ENCODE measurements at regions of chr4 and their contacts with region 1.

Region 1: DNA sequence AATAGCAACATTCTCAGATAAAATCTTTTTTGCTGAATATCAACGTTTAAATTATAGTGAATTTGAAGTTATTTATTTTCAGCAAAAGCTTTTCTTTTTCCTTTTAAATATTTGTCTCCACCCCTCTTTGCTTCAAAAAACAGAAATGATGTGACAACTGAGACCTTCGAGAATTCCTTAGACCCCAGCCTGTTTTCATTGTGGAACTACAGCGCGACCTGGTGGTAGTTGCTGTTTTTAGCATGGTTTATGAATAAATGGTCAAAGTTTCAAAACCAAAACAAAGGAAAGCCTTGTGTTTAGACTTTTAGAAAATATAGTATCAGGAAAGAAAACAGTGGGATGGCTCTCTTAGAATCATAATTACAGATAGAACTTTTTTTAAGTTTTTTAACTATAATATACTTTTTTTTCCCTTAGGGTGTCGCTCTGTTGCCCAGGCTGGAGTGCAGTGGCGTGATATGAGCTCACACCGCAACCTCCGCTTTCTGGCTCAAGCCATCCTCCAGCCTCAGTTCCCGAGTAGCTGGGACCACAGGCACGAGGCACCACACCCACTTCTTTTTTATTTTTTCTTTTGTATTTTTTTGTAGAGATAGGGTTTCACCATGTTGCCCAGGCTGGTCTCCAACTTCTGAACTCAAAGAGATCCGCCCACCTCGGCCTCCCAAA is 26.8 kb upstream of the TMEM184C start:
- H3K4me3 Mint-ChIP-seq: no peak overlapping the region
- H3K27ac Mint-ChIP-seq: no peak overlapping the region
- H3K4me1 Mint-ChIP-seq: no peaks in the 10 kb centered on the region
- H3K27me3 Mint-ChIP-seq: no peaks in the 10 kb centered on the region

Region 2: GRCh38 chr4:147160908-147161513 is 429.4 kb before region 1 on chr4:
- intact Hi-C with region 1: loop called (anchors 5 kb)
- H3K4me3 Mint-ChIP-seq: no peak overlapping the region
- H3K27ac Mint-ChIP-seq: no peak overlapping the region
- H3K4me1 Mint-ChIP-seq: no peaks in the 10 kb centered on the region
- H3K27me3 Mint-ChIP-seq: peaks cover 19% of the 10 kb centered on the region

Region 3: GRCh38 chr4:147407261-147408045 is 182.9 kb before region 1 on chr4:
- intact Hi-C with region 1: no loop called
- H3K4me3 Mint-ChIP-seq: no peak overlapping the region
- H3K27ac Mint-ChIP-seq: no peak overlapping the region
- H3K4me1 Mint-ChIP-seq: no peaks in the 10 kb centered on the region
- H3K27me3 Mint-ChIP-seq: no peaks in the 10 kb centered on the region

Region 4: DNA sequence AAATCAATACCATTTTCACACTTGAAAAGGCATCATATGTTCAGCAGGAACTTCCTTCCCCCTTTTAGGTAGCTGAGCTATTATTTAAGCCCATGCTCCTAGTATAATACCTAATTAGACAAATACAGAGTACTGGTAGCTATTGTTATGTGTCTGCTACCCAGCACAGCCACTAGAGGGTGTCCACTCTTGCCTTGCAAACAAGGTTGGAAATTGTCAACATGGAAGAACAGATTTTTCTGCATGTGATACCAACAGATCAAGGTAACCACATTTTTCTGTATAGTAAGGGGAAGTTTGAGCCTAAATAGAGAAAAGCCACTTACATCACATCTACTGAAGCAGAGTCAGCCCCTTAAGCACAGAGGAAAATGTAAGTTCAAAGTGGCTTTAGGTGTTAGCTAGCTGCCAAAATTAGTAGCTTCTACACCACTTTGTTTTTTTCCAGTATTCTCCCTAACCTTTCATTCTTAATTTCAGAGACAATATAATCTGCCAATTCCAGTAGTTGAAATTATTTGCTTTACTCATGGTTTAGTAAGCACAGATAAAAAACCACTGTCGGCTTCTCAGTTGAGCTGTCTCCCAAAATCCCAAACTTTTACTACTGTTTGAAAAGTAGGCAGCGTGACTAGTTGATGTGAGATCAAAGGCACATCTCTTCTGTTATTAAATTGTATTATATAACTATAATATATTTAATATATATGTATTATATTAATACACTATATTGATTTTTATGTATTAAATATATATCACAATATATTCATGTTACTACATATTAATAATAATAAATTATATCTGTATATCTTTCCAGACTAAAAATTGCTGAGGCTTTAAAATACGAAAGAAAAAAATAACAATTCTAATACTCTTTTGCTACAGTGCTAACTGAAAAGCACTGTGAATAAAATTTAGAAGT is 71.3 kb before region 1 on chr4:
- intact Hi-C with region 1: loop called (anchors 5 kb)
- H3K4me3 Mint-ChIP-seq: no peak overlapping the region
- H3K27ac Mint-ChIP-seq: no peak overlapping the region
- H3K4me1 Mint-ChIP-seq: no peaks in the 10 kb centered on the region
- H3K27me3 Mint-ChIP-seq: peaks cover 1% of the 10 kb centered on the region

Measured in dendritic cell treated with granulocyte-macrophage colony-stimulating factor and Interleukin-4, amounts not matched to agents 40 ng/mL and 50 ng/mL, for 4 days (primary cell).